H1 (cell line): ENCODE measurements at regions of chr12 and their contacts with region 1.

Region 1: DNA sequence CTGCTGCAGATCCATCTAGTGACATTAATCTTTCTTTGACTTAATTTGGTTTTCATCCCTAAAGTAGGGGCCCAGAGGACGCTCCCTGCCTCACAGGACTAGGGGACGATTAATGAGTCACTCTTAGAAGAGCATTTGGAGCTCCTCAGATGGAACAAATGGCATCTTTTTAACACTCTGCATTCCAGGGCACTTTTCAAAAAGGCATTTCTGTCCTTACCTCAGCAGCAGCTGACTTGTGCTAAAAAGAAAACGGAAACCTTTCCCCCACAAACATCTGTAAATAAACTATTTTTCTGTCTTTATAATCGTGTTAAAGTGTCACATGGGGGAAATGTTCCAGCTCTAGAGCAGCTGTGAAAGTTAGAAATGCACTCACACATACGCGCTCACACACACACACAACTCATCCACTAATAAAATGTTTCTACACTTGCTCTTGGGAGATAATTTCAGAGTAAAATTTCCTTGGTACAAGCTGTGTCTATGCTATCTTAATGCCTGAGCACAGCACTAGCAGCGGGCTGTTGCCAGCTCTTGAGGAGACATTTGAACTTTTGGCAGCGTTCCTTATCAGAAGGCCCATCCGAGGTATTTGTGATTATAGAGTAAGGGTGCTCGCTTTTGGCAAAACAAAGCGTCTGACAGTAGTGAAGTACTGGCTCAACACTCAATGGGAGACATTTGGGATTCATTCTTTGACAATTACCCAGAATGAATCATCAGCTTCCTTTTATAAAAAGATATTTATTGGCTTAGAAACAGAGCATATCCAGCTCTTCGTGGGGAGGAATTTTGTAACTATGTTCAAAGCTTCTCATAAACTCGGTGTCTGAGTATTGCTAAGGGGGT is 141.3 kb downstream of the PLXNC1 start:
- DNase-seq: peak in 1 of 2 experiments; percentile 31
- H3K4me3 ChIP-seq: no peak overlapping the region
- H3K27ac ChIP-seq: no peak overlapping the region
- H3K4me1 ChIP-seq: peaks cover 0 to 18% (median 11%) of the 10 kb centered on the region in 4 experiments; a peak in 6 of 7 replicates
- H3K27me3 ChIP-seq: no peaks in the 10 kb centered on the region
- CTCF ChIP-seq: no peak
- EP300 ChIP-seq: no peak
- POLR2A ChIP-seq: no peak
- RAD21 ChIP-seq: no peak

Region 2: DNA sequence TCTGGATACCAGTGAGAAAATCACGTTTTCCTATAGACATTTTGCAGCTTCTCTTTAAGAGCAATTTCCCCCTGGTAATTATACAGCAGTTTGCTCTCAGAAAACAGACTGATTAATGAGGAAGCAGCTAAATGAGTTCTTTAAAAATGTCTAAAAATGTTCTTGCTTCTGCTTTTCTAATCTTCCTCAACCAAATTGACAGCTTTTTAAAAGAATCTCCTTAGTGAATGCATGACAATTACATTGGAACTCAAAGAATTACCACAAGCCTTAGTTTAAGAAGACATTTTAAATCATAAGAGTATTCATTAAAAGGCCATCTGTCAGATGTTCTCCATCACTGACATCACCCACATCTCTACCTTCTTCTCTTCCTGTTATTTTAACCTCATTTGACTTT is 277.1 kb before region 1 on chr12:
- CTCF ChIA-PET with region 1: no interaction called
- POLR2A ChIA-PET with region 1: no interaction called
- DNase-seq: no peak
- H3K4me3 ChIP-seq: no peak overlapping the region
- H3K27ac ChIP-seq: no peak overlapping the region
- H3K4me1 ChIP-seq: peaks cover 0 to 4% (median 3%) of the 10 kb centered on the region in 4 experiments; a peak in 4 of 7 replicates
- H3K27me3 ChIP-seq: no peaks in the 10 kb centered on the region
- CTCF ChIP-seq: no peak
- EP300 ChIP-seq: no peak
- POLR2A ChIP-seq: no peak
- RAD21 ChIP-seq: no peak

Region 3: DNA sequence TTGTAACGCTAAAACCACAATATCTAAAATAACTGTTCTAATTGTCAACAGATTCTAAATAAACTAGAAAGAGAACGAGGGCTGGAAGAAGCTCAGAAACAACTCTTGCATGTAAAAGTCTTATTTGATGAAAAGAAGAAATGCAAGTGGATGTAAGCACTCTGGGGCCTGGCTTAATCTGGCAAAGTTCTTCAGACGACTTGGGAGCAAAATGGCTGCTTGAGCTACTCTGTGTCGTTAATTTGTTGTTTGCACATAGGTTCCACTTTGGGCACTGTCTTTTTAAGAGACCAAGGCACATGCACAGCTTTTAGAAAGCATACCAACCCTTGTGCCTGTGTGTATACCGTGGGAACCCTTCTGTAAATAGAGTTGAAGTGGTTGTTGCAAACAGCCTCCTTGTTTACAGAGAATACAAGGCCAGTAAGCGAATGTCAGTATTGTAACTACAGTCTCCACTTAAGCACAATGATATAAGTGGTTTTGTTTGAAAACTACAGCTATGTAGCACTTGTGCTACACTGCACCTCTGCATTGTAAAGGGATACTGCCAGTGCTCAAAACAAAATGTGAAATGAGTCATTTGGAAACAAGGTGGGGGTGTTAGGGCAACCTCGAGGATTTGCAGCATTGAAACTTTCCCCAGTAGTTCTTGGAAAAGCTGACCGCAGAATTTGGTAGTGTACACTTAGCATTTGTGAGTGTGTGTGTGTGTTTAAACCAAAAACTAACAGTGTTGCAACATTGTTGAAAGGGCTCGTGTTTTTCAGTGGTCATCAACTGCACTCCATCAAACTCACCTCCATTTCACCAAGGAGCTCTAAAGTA is 15.7 kb after region 1 on chr12:
- CTCF ChIA-PET with region 1: interaction called, 10 read pairs
- POLR2A ChIA-PET with region 1: interaction called, 5 read pairs
- DNase-seq: no peak
- H3K4me3 ChIP-seq: peak overlapping the region in 1 of 4 experiments; percentile 15; a peak in 1 of 8 replicates
- H3K27ac ChIP-seq: peak overlapping the region; percentile 73; the same call in 1 of the 2 replicates
- H3K4me1 ChIP-seq: peaks cover 8 to 19% (median 16%) of the 10 kb centered on the region in 4 experiments; a peak in 6 of 7 replicates
- H3K27me3 ChIP-seq: no peaks in the 10 kb centered on the region
- CTCF ChIP-seq: no peak
- EP300 ChIP-seq: no peak
- POLR2A ChIP-seq: no peak
- RAD21 ChIP-seq: no peak

Region 4: DNA sequence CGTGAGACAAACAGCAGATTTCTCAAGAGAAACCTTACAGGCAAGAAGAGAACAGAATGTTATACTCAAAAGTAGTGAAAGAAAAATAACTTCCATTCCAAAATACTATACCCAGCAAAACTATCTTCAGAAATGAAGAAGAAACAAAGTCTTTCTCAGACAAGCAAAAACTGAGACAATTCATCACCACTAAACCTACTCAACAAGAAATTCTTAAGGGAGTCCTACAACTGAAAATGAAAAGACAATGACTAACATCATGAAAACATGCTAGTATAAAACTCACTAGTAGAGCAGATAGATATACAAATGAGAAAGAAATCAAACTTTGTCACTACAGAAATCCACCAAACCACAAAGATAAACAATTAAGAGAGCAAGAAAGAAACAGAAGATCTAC is 63.4 kb after region 1 on chr12:
- CTCF ChIA-PET with region 1: no interaction called
- POLR2A ChIA-PET with region 1: no interaction called
- DNase-seq: no peak
- H3K4me3 ChIP-seq: no peak overlapping the region
- H3K27ac ChIP-seq: no peak overlapping the region
- H3K4me1 ChIP-seq: no peaks in the 10 kb centered on the region
- H3K27me3 ChIP-seq: no peaks in the 10 kb centered on the region
- CTCF ChIP-seq: no peak
- EP300 ChIP-seq: no peak
- POLR2A ChIP-seq: no peak
- RAD21 ChIP-seq: no peak